ENCODE measurements at regions of chr10 and their contacts with region 1.

Region 1: GRCh38 chr10:110252151-110252550 is 44.7 kb downstream of the MXI1 start:
- DNase-seq: no peak
- H3K4me3 Mint-ChIP-seq: no peak overlapping the region
- H3K27ac Mint-ChIP-seq: peak overlapping the region; percentile 56
- H3K4me1 Mint-ChIP-seq: peaks cover 34% of the 10 kb centered on the region
- H3K27me3 Mint-ChIP-seq: peaks cover 31% of the 10 kb centered on the region

Region 2: GRCh38 chr10:110162741-110163145 is 89.4 kb before region 1 on chr10:
- intact Hi-C with region 1: loop called (anchors 5 kb)
- DNase-seq: no peak
- H3K4me3 Mint-ChIP-seq: no peak overlapping the region
- H3K27ac Mint-ChIP-seq: no peak overlapping the region
- H3K4me1 Mint-ChIP-seq: peaks cover 22% of the 10 kb centered on the region
- H3K27me3 Mint-ChIP-seq: peaks cover 85% of the 10 kb centered on the region

Region 3: GRCh38 chr10:110273474-110273873 is 21.3 kb after region 1 on chr10:
- intact Hi-C with region 1: loop called (anchors 2 kb)
- DNase-seq: no peak
- H3K4me3 Mint-ChIP-seq: no peak overlapping the region
- H3K27ac Mint-ChIP-seq: no peak overlapping the region
- H3K4me1 Mint-ChIP-seq: peaks cover 21% of the 10 kb centered on the region
- H3K27me3 Mint-ChIP-seq: peaks cover 30% of the 10 kb centered on the region

Measured in activated CD4-positive, alpha-beta T cell treated with anti-CD3 and anti-CD28 coated beads, Interleukin-2, amount 10 ng/mL, durations not matched to agents 24 days and 14 days (primary cell).